K562 (cell line): ENCODE measurements at regions of chr9 and their contacts with region 1.

Region 1: DNA sequence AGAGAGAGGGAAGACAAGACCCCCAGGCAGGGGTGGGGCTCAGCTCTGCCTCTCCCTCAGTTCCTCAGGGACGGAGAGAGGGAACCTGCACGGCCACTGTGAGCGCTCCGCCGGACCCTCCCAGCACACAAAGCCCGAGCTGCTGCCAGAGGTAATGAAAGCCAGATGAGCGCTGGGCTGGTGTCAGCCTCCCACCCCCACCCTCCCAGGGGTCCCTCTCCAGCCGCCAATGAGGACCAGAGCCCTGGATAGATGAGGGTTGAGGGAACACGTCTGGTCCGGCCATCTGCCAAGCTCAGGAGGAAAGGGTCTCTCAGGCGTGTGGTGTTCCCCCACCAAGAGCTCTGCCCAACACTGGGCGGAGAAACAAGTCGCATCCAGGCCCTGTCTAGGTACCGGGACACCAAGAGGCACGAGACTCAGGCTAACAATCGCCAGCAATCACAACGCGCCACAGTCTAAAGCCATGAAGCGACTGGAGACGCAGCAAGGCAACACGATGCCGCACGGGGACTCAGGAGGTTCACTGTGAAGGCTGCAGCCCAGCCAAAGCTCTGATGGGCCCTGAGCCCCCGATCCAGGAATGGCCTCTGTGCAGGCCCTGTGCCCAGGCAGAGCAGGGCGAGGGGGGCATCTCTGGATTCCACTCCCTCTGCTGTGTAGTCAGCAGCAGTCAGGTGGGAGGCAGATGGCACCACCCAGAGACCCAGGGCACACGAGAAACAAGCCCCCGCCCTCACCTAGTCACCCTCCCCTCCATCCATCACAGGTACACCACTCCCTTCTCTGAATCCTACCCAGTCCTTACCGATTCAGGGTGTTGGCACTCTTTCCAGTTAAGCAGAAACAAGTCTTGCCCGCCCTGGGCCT is 1.3 kb downstream of the RALGDS start:
- DNase-seq: no peak
- ATAC-seq: no peak
- H3K4me3 ChIP-seq: peak overlapping the region; percentile 63; the same call in 1 of the 2 replicates
- H3K27ac ChIP-seq: no peak overlapping the region
- H3K4me1 ChIP-seq: peaks cover 55 to 94% of the 10 kb centered on the region in 2 experiments
- H3K27me3 ChIP-seq: no peaks in the 10 kb centered on the region
- CTCF ChIP-seq: no peak
- EP300 ChIP-seq: no peak
- POLR2A ChIP-seq: no peak
- RAD21 ChIP-seq: no peak

Region 2: GRCh38 chr9:132970324-132971062 is 149.2 kb before region 1 on chr9:
- CTCF ChIA-PET with region 1: no interaction called
- POLR2A ChIA-PET with region 1: no interaction called
- in situ Hi-C with region 1: no loop called
- intact Hi-C with region 1: no loop called
- DNase-seq: no peak
- ATAC-seq: no peak
- H3K4me3 ChIP-seq: no peak overlapping the region
- H3K27ac ChIP-seq: no peak overlapping the region
- H3K4me1 ChIP-seq: peaks cover 0 to 12% of the 10 kb centered on the region in 2 experiments; a peak in 3 of 5 replicates
- H3K27me3 ChIP-seq: no peaks in the 10 kb centered on the region
- CTCF ChIP-seq: no peak
- EP300 ChIP-seq: no peak
- POLR2A ChIP-seq: no peak
- RAD21 ChIP-seq: no peak

Region 3: GRCh38 chr9:133108794-133109641 is 10.7 kb before region 1 on chr9:
- CTCF ChIA-PET with region 1: no interaction called
- POLR2A ChIA-PET with region 1: interaction called, 12 read pairs
- in situ Hi-C with region 1: no loop called
- intact Hi-C with region 1: no loop called
- DNase-seq: no peak
- ATAC-seq: no peak
- H3K4me3 ChIP-seq: no peak overlapping the region
- H3K27ac ChIP-seq: no peak overlapping the region
- H3K4me1 ChIP-seq: peaks cover 3 to 25% of the 10 kb centered on the region in 2 experiments; a peak in 4 of 5 replicates
- H3K27me3 ChIP-seq: no peaks in the 10 kb centered on the region
- CTCF ChIP-seq: no peak
- EP300 ChIP-seq: no peak
- POLR2A ChIP-seq: no peak
- RAD21 ChIP-seq: no peak

Region 4: DNA sequence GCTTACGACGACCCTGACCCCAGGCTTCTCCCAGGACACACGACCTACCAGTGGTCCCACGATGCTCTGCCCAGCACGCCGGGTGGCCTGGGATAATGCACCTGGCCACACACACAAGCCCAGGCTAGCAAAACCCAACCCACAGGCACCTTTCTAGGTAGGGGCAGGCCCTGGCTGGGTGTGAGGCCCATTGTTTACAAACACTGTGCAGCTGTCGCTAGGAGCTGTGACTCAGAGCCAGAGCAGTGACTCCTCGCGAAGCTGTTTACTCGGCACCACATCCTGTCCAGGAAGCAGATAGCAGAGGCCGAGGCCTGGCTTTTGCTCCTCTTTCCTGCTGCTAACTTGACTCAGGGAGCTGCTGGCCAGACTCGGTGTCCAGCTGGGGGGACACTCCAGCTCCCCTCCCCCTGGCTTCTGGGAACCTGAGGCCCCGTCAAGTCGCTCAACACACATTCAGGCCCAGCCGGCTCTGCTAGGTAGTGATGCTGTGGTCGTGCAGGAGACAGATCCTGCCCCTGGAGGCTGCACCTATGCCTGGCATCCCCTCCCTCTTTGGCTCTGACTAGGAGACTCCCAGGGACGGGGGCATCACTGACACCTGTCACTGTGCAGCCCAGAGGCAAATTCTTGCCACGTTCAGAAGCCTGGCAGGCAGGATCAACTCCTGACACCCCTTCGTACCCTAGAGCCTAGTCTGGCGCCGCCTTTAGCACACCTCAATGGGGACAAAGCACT is 14.1 kb after region 1 on chr9:
- CTCF ChIA-PET with region 1: no interaction called
- POLR2A ChIA-PET with region 1: interaction called, 9 read pairs
- in situ Hi-C with region 1: no loop called
- intact Hi-C with region 1: loop called (anchors 2 kb)
- DNase-seq: peak; percentile 74 to 91 (median 83)
- ATAC-seq: peak; percentile 92
- H3K4me3 ChIP-seq: no peak overlapping the region
- H3K27ac ChIP-seq: peak overlapping the region; percentile 80
- H3K4me1 ChIP-seq: peaks cover 56 to 68% of the 10 kb centered on the region in 2 experiments
- H3K27me3 ChIP-seq: no peaks in the 10 kb centered on the region
- CTCF ChIP-seq: no peak
- EP300 ChIP-seq: peak; percentile 85
- POLR2A ChIP-seq: no peak
- RAD21 ChIP-seq: peak in 1 of 2 experiments; percentile 34; a peak in 2 of 4 replicates

Region 5: DNA sequence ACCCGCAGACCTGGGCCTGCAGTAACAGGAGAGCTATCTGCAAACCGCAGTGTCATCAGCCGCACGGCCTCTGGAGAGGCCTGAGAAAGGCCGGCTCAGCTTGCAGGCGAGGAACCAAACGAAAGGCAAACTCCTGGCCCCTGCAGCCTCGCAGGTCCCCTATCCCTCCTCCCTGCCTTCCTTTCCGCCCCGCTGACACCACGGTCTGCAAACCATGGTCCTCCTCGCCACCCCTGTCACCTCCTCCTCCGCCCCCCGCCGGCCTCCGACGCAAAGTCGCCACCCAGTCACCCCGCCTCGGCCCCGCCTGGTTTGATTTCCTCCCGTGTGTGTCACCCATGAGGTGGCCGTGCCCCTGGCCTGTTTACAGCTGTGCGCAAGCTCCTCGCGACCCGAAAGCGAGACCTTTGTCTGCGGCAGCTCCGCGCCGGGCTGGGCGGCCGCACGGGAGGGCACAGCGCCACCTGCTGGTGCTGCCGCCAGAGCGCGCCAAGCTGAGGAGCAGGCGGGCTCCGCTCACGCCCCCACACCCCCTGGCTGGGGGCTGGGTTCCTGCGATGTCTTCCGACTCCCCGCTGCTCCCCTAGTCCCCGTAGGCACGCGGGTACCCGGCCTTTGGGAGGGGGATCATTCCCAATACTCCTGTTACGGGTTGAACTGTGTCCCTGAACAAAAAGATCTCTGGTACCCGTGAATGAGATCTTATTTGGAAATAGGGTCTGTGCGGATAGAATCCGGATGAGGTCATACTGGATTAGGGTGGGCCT is 24.6 kb after region 1 on chr9:
- CTCF ChIA-PET with region 1: no interaction called
- POLR2A ChIA-PET with region 1: interaction called, 9 read pairs
- in situ Hi-C with region 1: no loop called
- intact Hi-C with region 1: loop called (anchors 1 kb)
- DNase-seq: peak; percentile 74 to 83 (median 77)
- ATAC-seq: peak; percentile 74
- H3K4me3 ChIP-seq: peak overlapping the region; percentile 41
- H3K27ac ChIP-seq: peak overlapping the region; percentile 72
- H3K4me1 ChIP-seq: peaks cover 55 to 80% of the 10 kb centered on the region in 2 experiments
- H3K27me3 ChIP-seq: no peaks in the 10 kb centered on the region
- CTCF ChIP-seq: peak; percentile 88 to 98 (median 96)
- EP300 ChIP-seq: no peak
- POLR2A ChIP-seq: no peak; the same call in 1 of the 2 replicates
- RAD21 ChIP-seq: peak; percentile 90 to 97

Region 6: GRCh38 chr9:133691626-133692363 is 572.1 kb after region 1 on chr9:
- CTCF ChIA-PET with region 1: no interaction called
- POLR2A ChIA-PET with region 1: no interaction called
- in situ Hi-C with region 1: no loop called
- intact Hi-C with region 1: no loop called
- DNase-seq: no peak
- ATAC-seq: no peak
- H3K4me3 ChIP-seq: no peak overlapping the region
- H3K27ac ChIP-seq: no peak overlapping the region
- H3K4me1 ChIP-seq: peaks cover 0 to 4% of the 10 kb centered on the region in 2 experiments; a peak in 2 of 5 replicates
- H3K27me3 ChIP-seq: peaks cover 21 to 85% of the 10 kb centered on the region in 2 experiments; a peak in 4 of 5 replicates
- CTCF ChIP-seq: no peak
- EP300 ChIP-seq: no peak
- POLR2A ChIP-seq: no peak
- RAD21 ChIP-seq: no peak